HepG2 (cell line): ENCODE measurements at regions of chr4 and their contacts with region 1.

Region 1: GRCh38 chr4:153785910-153786721 is 2.8 kb downstream of the SFRP2 start:
- DNase-seq: peak; percentile 3
- ATAC-seq: peak; percentile 66
- H3K4me3 ChIP-seq: no peak overlapping the region
- H3K27ac ChIP-seq: no peak overlapping the region
- H3K4me1 ChIP-seq: no peaks in the 10 kb centered on the region
- H3K27me3 ChIP-seq: peaks cover 5 to 38% of the 10 kb centered on the region in 2 experiments; a peak in 3 of 5 replicates
- CTCF ChIP-seq: peak; percentile 40
- EP300 ChIP-seq: no peak
- POLR2A ChIP-seq: no peak
- RAD21 ChIP-seq: no peak

Region 2: GRCh38 chr4:153773236-153773690 is 12.9 kb before region 1 on chr4:
- CTCF ChIA-PET with region 1: no interaction called
- POLR2A ChIA-PET with region 1: no interaction called
- in situ Hi-C with region 1: no loop called
- intact Hi-C with region 1: no loop called
- DNase-seq: no peak
- ATAC-seq: no peak
- H3K4me3 ChIP-seq: no peak overlapping the region
- H3K27ac ChIP-seq: no peak overlapping the region
- H3K4me1 ChIP-seq: no peaks in the 10 kb centered on the region
- H3K27me3 ChIP-seq: no peaks in the 10 kb centered on the region
- CTCF ChIP-seq: 0 out of 2 replicates have a peak, but pooled peaks have one; percentile 32
- EP300 ChIP-seq: no peak
- POLR2A ChIP-seq: no peak
- RAD21 ChIP-seq: no peak

Region 3: DNA sequence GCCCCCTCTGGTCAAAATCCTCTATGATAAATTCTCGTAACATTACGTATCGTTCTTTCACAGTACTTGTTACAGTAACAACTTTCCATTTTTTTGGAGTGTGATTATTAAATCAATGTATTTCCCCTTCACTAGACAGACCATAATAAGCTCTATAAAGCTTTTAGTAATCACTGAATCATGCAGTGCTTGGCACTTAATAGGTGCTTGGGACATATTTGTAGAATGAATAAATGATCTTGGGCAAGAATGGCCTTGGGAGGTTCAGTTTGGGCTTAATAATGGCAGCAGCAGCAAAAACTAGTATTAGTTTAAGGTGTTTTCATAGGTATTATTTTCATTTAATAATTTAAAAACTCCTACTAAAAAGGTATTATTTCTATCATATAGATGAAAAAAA is 36.2 kb after region 1 on chr4:
- CTCF ChIA-PET with region 1: no interaction called
- POLR2A ChIA-PET with region 1: no interaction called
- in situ Hi-C with region 1: no loop called
- intact Hi-C with region 1: no loop called
- DNase-seq: no peak
- ATAC-seq: no peak
- H3K4me3 ChIP-seq: no peak overlapping the region
- H3K27ac ChIP-seq: no peak overlapping the region
- H3K4me1 ChIP-seq: no peaks in the 10 kb centered on the region
- H3K27me3 ChIP-seq: no peaks in the 10 kb centered on the region
- CTCF ChIP-seq: no peak
- EP300 ChIP-seq: no peak
- POLR2A ChIP-seq: no peak
- RAD21 ChIP-seq: no peak

Region 4: DNA sequence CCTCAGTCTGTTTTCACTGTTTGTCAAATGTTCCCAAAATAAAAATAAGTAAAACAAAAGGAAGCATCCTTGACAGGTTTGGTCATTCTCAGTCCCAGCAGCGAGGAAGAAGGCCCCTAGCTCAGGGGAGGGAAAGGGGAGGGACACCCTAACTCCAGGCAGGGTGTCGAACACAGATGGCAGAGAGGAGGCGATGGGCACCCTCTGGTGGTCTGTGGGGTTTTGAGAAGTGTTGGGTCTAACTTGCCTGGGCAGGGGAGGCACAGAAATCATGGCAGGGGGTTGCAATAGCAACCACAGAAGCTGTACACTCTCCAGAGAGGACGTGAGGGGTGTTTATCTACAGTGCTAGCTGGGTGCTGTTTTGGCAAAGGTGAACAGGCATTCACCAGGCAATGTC is 232.5 kb after region 1 on chr4:
- CTCF ChIA-PET with region 1: no interaction called
- POLR2A ChIA-PET with region 1: no interaction called
- in situ Hi-C with region 1: no loop called
- intact Hi-C with region 1: no loop called
- DNase-seq: no peak
- ATAC-seq: no peak
- H3K4me3 ChIP-seq: no peak overlapping the region
- H3K27ac ChIP-seq: no peak overlapping the region
- H3K4me1 ChIP-seq: no peaks in the 10 kb centered on the region
- H3K27me3 ChIP-seq: no peaks in the 10 kb centered on the region; a peak in 1 of 5 replicates
- CTCF ChIP-seq: no peak
- EP300 ChIP-seq: no peak
- POLR2A ChIP-seq: no peak
- RAD21 ChIP-seq: no peak

Region 5: DNA sequence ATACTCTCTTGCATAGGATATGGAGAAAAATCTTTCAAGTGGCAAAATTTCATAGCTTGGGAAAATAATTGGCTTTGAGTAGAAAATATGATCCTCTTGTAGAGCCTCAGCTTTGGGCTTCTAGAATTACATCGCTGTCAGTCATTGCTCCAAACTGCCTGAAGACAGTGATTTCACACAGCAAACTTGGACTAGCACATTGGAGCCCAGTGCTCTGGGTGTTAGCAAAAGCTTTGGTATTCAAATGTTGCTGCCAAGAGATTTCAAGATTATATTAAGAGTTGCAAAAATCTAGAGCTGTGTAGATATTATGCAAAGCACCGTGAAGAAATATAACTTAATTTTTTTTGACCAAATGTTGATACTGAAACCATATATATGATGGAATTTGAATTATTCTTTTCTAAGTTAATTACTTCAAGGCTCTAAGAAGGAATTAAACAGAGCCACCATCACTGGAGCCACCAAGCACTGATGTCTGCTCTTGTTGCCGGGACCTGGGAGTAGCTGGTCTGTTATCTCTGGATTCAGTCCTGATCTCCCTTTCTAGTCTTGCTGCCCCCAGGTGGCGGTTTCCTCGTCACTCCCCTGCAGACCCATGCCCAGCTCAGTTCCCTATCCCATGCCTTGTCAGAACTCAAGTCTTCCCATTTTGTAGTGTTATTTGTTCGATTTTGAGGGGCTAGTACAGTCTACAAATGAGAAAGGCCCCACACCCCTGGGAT is 263.5 kb after region 1 on chr4:
- CTCF ChIA-PET with region 1: no interaction called
- POLR2A ChIA-PET with region 1: no interaction called
- in situ Hi-C with region 1: no loop called
- intact Hi-C with region 1: loop called (anchors 2 kb)
- DNase-seq: peak; percentile 9
- ATAC-seq: peak; percentile 91
- H3K4me3 ChIP-seq: no peak overlapping the region
- H3K27ac ChIP-seq: no peak overlapping the region
- H3K4me1 ChIP-seq: no peaks in the 10 kb centered on the region
- H3K27me3 ChIP-seq: no peaks in the 10 kb centered on the region; a peak in 1 of 5 replicates
- CTCF ChIP-seq: peak; percentile 50
- EP300 ChIP-seq: no peak
- POLR2A ChIP-seq: no peak
- RAD21 ChIP-seq: no peak

Region 6: GRCh38 chr4:154314248-154314647 is 528.1 kb after region 1 on chr4:
- CTCF ChIA-PET with region 1: no interaction called
- POLR2A ChIA-PET with region 1: no interaction called
- in situ Hi-C with region 1: no loop called
- intact Hi-C with region 1: loop called (anchors 10 kb)
- DNase-seq: peak; percentile 13
- ATAC-seq: peak; percentile 57; the same call in 2 of the 3 replicates
- H3K4me3 ChIP-seq: no peak overlapping the region
- H3K27ac ChIP-seq: no peak overlapping the region
- H3K4me1 ChIP-seq: no peaks in the 10 kb centered on the region
- H3K27me3 ChIP-seq: no peaks in the 10 kb centered on the region
- CTCF ChIP-seq: peak; percentile 34
- EP300 ChIP-seq: no peak
- POLR2A ChIP-seq: no peak
- RAD21 ChIP-seq: no peak